Ascending aorta (tissue), 2 donors: ENCODE measurements at regions of chr1 and their contacts with region 1.

Region 1: DNA sequence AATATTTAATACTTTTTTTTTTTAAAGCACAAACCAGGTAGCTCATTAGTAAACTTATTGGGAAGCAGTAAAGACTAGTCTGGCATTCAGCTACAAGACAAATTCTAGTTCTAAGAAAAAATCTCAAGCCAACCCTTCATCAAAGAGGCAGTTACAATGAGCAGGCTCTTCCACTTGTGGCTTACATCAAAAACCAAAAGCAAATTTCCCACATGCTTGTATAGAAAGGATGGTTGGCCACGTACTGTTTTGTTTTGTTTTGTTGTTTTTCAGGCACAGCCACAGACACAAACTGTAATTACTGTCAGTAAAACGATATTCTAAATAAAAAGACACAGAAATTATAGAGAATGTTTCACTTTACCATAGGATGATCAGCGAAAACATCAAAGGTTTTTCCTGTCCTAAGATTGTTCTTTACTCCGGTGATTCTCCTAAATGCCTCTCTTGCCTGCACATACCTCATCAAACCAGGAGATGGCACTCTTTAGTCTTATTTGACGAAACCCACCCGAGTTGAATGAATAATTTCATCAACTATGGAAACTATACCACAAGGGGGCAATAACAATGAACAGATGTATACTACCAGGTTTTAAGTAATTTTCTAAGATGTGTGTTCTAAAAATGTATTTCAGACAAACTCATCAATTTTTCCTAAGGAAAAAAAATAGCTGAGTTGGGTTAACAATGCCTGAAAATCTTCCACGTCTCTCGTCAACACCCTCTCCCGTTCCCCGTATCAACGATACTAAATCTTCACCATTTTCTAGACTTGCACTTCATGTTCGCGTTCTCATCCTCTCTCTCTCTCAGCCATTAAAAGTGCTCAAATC is 26.9 kb downstream of the RPL5 start:
- DNase-seq: peak in 1 of 2 donors; percentile 79
- H3K4me3 ChIP-seq: peak overlapping the region; percentile 8 to 33
- H3K27ac ChIP-seq: no peak overlapping the region
- H3K4me1 ChIP-seq: no peaks in the 10 kb centered on the region
- H3K27me3 ChIP-seq: no peaks in the 10 kb centered on the region
- CTCF ChIP-seq: peak; percentile 90 to 96 (median 92)

Region 2: DNA sequence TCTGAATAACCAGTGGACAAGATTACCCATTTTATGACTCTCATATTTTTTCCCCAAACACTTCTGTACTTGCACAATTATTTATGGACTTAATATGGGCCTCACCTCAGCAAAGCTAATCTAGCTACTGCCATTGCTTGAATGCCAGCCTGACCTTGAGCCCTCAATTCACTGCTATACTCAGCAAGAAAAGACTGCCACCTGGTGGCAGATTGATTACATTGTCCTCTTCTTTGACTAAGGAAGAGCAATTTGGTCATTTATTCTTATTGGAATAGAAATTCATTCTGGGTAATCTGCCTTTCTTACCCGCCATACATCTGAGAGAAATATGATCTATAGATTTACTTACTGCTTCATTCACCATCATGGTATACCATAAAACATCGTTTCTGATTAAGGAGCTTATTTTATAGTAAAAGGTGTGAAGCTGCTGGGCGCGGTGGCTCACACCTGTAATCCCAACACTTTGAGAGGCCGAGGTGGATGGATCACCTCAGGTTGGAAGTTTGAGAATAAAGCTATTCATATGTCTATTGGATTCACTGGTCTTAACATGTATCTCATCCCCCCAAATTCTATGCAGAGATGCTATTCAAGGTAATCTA is 135.4 kb after region 1 on chr1:
- intact Hi-C with region 1: loop called (anchors 1 kb)
- DNase-seq: peak in 1 of 2 donors; percentile 87
- H3K4me3 ChIP-seq: no peak overlapping the region
- H3K27ac ChIP-seq: no peak overlapping the region
- H3K4me1 ChIP-seq: peaks cover 0 to 5% of the 10 kb centered on the region in 2 donors
- H3K27me3 ChIP-seq: no peaks in the 10 kb centered on the region
- CTCF ChIP-seq: peak; percentile 75 to 84 (median 77)